Activated T-helper 2 cell treated with anti-CD3 and anti-CD28 coated beads, Interferon-gamma antibody, Interleukin-2, Interleukin-4, amounts not matched to agents 10 μg/mL and 5 μg/mL and 100 μg/mL, durations not matched to agents 14 hours and 24 hours and 36 hours (primary cell): ENCODE measurements at regions of chr7 and their contacts with region 1.

Region 1: DNA sequence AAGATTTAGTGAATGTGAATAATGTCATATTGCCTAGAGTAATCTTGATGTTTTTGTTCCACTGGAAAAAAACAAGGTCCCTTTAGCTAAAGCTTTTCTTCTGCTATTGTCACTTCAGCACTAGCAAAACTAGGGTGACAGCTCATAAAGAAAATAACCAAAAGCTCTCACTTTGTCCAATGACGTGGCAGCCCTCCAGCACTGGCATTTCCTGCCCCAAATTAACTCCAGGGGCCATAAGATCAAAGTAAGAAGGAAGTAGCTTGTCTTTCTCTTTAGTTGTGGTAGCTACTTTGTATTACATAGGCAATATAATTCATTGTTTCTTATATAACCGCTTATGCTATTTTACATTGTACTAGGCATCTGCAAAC is 47.3 kb downstream of the LRRN3 start:
- DNase-seq: peak; percentile 57
- H3K4me3 Mint-ChIP-seq: peak overlapping the region; percentile 57
- H3K27ac Mint-ChIP-seq: peak overlapping the region; percentile 93
- H3K4me1 Mint-ChIP-seq: peaks cover 32% of the 10 kb centered on the region
- H3K27me3 Mint-ChIP-seq: no peaks in the 10 kb centered on the region

Region 2: DNA sequence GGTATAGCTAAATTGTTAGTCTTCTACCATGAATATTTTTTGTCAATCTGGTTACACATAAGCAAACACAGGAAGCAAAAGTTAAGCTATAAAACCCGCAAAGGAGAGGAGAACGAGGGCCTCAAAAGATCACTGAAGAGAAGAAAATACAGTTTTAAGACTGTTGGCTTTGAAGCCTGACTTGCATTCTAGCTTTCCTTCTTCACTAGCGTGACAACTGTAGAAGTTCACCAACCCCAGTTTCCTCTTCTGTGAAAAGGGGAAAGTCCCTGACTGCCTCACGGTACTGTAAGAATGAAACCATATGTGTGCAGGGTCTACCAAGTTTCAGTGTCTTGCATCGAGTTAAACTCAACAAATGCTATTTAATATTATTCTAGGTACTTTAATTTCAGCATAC is 54.8 kb before region 1 on chr7:
- intact Hi-C with region 1: loop called (anchors 1 kb)
- DNase-seq: peak; percentile 70
- H3K4me3 Mint-ChIP-seq: peak overlapping the region; percentile 64
- H3K27ac Mint-ChIP-seq: peak overlapping the region; percentile 94
- H3K4me1 Mint-ChIP-seq: peaks cover 72% of the 10 kb centered on the region
- H3K27me3 Mint-ChIP-seq: no peaks in the 10 kb centered on the region

Region 3: DNA sequence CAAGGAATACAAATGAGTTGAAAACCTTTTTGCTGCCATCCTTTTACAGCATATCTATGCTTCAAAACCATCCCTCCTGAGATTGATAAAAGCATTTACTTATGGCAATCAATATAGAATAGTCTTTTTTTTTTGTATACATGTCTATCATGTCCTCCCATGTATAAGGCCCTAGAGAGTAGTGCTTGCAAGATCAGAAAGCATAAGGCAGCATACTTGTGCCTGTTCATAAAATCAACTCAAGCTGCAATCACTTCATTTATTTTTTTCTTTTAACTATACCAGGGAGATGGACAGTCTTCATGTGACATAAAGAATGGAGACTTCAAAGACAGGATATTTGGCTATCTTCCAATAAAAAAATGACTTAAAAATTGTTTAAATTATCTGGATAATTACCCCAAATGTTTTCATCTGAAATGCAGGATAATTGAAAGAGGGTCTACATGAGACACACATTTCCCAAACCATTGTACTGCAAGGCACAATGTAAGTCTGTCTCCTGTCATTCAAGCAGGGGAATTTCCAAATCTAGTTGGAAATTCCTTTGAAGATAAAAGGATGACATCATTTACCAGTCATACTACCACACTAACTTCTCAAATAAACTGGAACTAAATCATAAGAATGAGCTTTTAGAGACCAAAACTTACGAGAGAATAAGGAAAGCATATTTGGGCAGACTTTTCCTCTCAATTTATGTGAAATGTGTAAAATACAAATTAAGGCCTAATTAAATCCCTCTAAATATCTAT is 24.7 kb before region 1 on chr7:
- intact Hi-C with region 1: loop called (anchors 1 kb)
- DNase-seq: no peak
- H3K4me3 Mint-ChIP-seq: no peak overlapping the region
- H3K27ac Mint-ChIP-seq: peak overlapping the region; percentile 88
- H3K4me1 Mint-ChIP-seq: peaks cover 40% of the 10 kb centered on the region
- H3K27me3 Mint-ChIP-seq: no peaks in the 10 kb centered on the region

Region 4: DNA sequence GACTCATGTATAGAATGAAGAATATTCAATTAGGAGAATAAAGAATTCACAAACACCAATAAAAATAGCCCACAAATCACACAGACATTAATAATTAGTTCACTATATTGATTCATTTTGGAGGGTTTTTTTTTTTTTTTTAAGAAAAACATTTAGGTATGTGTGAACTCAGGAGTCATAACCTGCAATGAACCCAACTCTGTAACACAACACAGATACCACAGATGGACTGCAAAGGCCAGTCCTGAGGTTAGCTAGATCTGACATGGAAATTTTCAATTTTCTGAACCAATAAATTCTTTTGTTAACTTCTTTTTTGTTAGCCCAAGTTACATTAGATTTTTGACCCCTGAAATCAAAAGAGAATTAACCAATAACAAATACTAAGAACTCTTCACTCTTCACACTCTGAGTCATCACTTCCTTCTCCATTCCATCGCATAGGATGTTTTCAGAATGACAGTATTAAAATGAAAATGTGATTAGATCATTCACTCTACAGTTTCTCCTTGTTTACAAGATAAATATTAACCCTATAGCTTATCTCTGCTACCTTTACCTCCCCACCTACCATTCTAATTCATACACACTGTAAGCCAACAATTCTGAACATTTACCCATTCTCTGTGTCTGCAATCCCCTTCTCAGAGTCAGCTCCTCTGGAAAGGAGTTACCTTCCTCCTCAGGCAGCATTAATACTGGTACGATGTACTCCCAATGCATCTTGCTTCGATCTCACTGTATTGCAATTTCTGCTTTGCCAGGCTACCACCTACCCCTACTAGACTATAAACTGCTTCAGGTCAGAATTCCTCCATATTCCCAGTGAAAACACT is 94.3 kb after region 1 on chr7:
- intact Hi-C with region 1: loop called (anchors 5 kb)
- DNase-seq: no peak
- H3K4me3 Mint-ChIP-seq: no peak overlapping the region
- H3K27ac Mint-ChIP-seq: no peak overlapping the region
- H3K4me1 Mint-ChIP-seq: peaks cover 20% of the 10 kb centered on the region
- H3K27me3 Mint-ChIP-seq: no peaks in the 10 kb centered on the region

Region 5: DNA sequence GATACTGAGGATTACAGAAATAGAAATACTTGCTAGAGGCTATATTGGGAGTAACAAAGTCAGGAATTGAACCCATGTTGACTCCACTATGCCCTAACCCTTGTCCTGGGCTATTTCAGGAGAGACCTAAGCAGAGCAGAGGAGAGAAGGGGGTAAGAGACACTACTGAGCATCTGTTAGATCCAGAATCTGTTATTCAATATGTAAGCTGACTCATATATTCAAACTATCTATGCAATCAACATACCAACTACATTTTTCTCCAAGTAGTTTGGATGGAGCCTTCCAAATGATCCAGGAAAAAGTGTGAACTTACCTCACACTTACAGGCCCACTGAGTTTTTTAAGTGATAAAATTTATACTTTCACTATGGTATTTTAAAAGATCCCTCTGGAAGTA is 208.0 kb after region 1 on chr7:
- intact Hi-C with region 1: no loop called
- DNase-seq: no peak
- H3K4me3 Mint-ChIP-seq: no peak overlapping the region
- H3K27ac Mint-ChIP-seq: no peak overlapping the region
- H3K4me1 Mint-ChIP-seq: peaks cover 3% of the 10 kb centered on the region
- H3K27me3 Mint-ChIP-seq: no peaks in the 10 kb centered on the region